ENCODE measurements at regions of chr20 and their contacts with region 1.

Region 1: DNA sequence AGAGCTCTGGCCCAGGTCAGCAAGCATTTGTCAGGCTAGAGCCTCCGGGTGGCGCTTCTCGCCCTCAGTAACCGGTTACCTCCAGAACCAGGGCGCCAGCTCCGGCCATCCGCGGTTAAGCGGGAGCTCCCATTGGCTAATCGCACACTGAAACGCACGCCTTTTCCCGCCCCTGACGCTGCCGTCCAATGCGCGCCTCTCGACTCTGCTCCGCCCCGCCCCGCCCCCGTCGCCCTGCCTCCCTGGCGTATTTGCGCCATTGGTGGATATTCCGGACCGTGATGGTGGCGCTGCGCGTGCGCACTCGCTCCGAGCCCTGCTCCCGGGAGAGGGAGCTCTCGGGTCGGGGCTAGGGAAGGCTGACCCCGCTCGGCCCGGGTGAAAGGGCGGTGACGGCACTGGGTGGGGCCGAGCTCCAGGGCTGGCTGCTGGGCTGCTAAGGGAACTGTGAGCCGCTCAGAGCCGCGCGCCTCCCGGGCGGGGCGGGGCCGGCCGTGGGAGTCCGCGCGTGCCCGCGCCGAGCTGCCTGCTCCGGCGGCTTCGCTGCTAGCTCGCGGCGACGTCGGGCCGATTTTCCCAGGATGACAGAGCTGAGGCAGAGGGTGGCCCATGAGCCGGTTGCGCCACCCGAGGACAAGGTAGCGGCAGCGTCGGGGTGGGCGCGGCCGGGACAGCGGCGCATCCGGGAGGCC is at the start of gene CDS2:
- DNase-seq: peak; percentile 100
- H3K4me3 ChIP-seq: peak within 1 kb of the TSS; percentile 88 to 98
- H3K27ac ChIP-seq: peak within 1 kb of the TSS; percentile 91 to 95
- H3K4me1 ChIP-seq: peaks cover 18% of the 10 kb centered on the region
- H3K27me3 ChIP-seq: no peaks in the 10 kb centered on the region
- CTCF ChIP-seq: peak; percentile 54 to 78 (median 61)
- POLR2A ChIP-seq: peak; percentile 23
- total RNA-seq, gene CDS2: 65.7 to 71.0 TPM

Region 2: GRCh38 chr20:5090191-5090590 is 36.5 kb before region 1 on chr20:
- intact Hi-C with region 1: no loop called
- DNase-seq: no peak
- H3K4me3 ChIP-seq: no peak overlapping the region
- H3K27ac ChIP-seq: peak overlapping the region in 1 of 2 donors; percentile 3
- H3K4me1 ChIP-seq: no peaks in the 10 kb centered on the region
- H3K27me3 ChIP-seq: no peaks in the 10 kb centered on the region
- CTCF ChIP-seq: no peak
- POLR2A ChIP-seq: no peak

Region 3: DNA sequence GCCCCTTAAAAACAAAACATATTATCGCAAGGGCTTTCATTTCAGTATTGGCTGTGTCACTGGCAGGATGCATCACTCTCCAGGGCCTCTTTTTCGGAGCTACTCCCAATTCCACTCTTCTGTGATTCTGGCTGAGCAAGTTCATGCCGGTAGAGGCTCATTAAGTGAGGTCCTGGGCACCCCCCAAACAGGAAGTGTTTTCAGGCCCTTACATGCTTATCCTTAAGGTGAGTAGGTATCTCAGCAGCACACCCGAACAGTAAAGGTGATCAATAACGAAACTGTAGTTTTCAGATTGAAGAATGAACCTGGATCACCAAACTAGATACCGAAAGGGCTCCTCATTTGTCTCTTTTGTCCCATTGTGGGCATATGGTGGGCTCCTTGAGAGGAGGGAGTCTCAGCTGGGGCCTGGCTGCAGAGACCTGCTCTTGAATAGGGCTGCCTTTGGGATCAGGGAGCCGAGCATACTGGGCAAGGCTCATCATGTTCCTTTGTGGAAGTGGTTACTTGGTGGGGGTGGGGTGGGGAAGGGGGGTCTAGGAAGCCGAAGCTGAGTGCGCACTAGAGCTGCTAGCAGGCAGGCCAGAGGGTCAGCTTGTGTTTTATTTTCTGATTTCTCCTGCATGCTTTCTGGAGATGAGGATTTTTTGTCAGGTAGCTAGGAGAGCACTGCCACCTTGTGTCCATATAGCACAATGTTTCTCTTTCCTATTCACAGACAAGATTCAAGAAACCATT is 65.3 kb after region 1 on chr20:
- intact Hi-C with region 1: loop called (anchors 5 kb)
- DNase-seq: peak; percentile 49
- H3K4me3 ChIP-seq: no peak overlapping the region
- H3K27ac ChIP-seq: peak overlapping the region; percentile 51 to 73
- H3K4me1 ChIP-seq: peaks cover 6% of the 10 kb centered on the region
- H3K27me3 ChIP-seq: no peaks in the 10 kb centered on the region
- CTCF ChIP-seq: peak; percentile 65 to 77 (median 69)
- POLR2A ChIP-seq: no peak